PC-3 (cell line): ENCODE measurements at regions of chr5 and their contacts with region 1.

Region 1: DNA sequence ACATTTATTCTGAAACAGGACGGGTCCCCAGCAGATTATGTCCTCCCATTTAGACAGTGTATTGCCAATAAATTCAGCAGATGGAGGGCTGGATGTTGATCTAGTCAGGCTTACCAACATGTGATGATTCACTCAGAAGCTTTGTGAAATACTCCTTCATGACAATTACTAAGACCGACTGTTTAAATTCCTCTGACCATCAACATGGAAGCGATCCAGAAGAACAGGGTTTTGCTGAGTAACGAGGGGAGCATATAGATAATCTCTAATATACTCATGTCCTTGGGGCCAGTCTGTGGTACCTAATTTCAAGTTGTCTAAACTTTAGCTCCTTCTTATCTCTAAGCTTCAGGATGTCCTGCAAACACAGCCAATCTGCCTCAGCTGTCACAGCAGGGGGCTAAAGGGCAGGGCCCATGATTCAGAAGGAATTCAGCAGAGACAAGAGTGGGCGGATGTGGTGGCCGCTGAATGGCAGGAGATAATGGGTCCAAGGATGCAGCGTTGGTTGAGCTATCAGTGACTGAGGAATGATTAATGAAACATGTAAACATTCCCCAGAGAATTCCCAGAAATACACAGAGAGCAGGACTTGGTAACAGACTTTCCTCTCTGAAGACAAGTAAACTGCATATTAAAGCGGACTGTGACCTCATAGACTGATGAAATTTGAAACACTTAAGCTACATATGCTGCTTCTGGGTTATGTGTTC is 109.4 kb downstream of the ANKRD55 start:
- DNase-seq: peak; percentile 87
- ATAC-seq: peak; percentile 93
- H3K4me3 ChIP-seq: no peak overlapping the region
- H3K27ac ChIP-seq: peak overlapping the region; percentile 74
- H3K4me1 ChIP-seq: peaks cover 21% of the 10 kb centered on the region
- H3K27me3 ChIP-seq: no peaks in the 10 kb centered on the region
- CTCF ChIP-seq: no peak

Region 2: GRCh38 chr5:56175488-56175887 is 51.8 kb after region 1 on chr5:
- CTCF ChIA-PET with region 1: no interaction called
- POLR2A ChIA-PET with region 1: no interaction called
- intact Hi-C with region 1: loop called (anchors 1 kb)
- DNase-seq: peak; percentile 48
- ATAC-seq: peak; percentile 82
- H3K4me3 ChIP-seq: no peak overlapping the region
- H3K27ac ChIP-seq: no peak overlapping the region
- H3K4me1 ChIP-seq: 0 out of 2 replicates have a peak, but pooled peaks cover 4% of the 10 kb centered on the region
- H3K27me3 ChIP-seq: no peaks in the 10 kb centered on the region
- CTCF ChIP-seq: no peak